Motor neuron (in vitro differentiated cells): ENCODE measurements at regions of chr1 and their contacts with region 1.

Region 1: DNA sequence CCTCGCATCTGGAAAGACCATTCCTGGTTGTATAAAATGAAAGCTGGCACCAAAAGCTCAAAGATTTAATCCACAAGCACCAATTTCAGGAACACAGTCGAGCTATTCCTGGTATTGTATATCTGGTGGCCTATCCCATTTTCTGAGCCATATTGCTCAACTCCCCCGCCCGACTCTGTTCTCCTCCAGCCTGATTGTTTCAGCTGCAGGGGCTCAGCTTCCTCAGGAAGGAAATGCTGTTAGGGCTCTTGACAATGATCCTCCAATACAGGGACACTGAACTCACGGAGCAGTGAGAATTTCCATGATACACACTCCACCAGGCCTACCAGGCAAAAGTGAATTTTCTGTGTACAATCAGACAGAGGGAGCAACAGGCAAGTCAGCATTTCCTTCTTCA is 16.9 kb upstream of the TDRD10 start:
- ATAC-seq: no peak
- H3K4me3 ChIP-seq: no peak overlapping the region
- H3K27ac ChIP-seq: no peak overlapping the region
- H3K4me1 ChIP-seq: peaks cover 13 to 21% of the 10 kb centered on the region in 2 donors

Region 2: GRCh38 chr1:154117642-154118041 is 367.5 kb before region 1 on chr1:
- in situ Hi-C with region 1: no loop called
- ATAC-seq: no peak
- H3K4me3 ChIP-seq: no peak overlapping the region
- H3K27ac ChIP-seq: no peak overlapping the region
- H3K4me1 ChIP-seq: peaks cover 6 to 8% of the 10 kb centered on the region in 2 donors

Region 3: DNA sequence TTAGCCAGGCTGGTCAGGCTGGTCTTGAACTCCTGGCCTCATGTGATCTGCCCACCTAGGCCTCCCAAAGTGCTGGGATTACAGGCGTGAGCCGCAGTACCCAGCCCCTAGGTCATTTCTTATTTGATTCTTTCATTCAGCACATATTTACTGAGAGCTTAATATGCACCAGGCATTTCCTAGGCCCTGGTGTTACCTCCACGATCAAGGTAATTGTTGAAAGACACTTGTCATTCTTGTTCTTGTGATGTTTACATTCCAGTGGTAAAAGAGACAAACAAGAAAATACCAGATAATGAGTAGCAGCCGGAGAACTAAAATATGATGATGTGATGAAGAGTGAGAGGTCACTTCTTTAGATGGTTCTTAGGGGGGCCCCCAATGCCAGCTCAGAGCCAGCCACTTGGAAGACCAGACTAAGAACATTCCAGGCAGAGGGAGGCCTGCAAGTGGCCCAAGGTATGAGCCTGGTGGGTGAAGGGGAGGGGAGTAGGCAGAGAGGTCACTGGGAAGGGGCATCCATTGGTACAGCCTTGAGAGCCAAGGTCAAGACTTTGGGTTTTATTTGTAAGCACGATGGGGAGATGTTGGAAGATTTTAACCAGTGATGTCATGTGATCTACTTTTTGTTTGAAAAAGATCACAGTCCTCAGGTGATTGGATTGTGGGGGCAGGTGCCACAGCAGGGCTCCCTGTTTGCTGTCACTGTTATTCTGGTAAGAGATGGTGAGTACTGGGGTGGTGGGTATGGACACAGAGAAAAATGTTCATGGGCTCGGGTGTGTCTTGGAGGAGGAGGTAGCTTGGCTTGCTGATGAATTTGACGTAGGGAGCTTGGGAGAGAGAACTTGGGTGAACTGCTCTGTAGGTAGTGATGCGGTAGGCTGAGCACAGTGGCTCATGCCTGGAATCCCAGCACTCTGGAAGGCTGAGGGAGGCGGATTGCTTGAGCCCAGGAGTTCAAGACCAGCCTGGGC is 54.7 kb after region 1 on chr1:
- in situ Hi-C with region 1: loop called in 1 of 9 experiments (anchors 5 kb)
- ATAC-seq: no peak
- H3K4me3 ChIP-seq: no peak overlapping the region
- H3K27ac ChIP-seq: no peak overlapping the region
- H3K4me1 ChIP-seq: no peaks in the 10 kb centered on the region

Region 4: GRCh38 chr1:154598871-154599635 is 113.9 kb after region 1 on chr1:
- in situ Hi-C with region 1: no loop called
- ATAC-seq: peak in 3 of 8 experiments; percentile 3 to 14 (median 7)
- H3K4me3 ChIP-seq: no peak overlapping the region
- H3K27ac ChIP-seq: peak overlapping the region in 1 of 2 donors; percentile 30
- H3K4me1 ChIP-seq: peaks cover 4 to 9% of the 10 kb centered on the region in 2 donors